Dendritic cell treated with granulocyte-macrophage colony-stimulating factor and Interleukin-4, amounts not matched to agents 40 ng/mL and 50 ng/mL, for 4 days (primary cell): ENCODE measurements at regions of chr1 and their contacts with region 1.

Region 1: DNA sequence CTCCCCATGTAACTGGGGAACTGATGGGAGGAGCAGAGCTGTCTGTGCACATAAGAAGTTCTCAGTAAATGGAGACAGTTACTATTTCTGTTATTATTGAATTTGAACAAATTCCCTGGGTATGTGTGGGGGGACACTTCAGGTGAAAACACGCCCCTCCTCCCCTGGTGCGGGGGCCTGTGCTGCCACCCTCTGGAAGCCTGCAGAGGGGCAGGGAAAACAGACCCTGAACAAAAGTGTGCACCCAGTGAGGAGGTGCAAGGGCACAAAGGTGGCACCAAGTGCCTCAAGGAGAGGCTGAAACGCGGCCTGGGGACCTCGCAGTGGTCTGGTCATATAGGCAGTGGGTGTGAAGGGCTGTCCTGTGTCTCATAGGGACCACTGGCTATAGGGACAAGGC is 18.2 kb upstream of the NADK start:
- H3K4me3 Mint-ChIP-seq: no peak overlapping the region
- H3K27ac Mint-ChIP-seq: peak overlapping the region; percentile 69
- H3K4me1 Mint-ChIP-seq: peaks cover 27% of the 10 kb centered on the region
- H3K27me3 Mint-ChIP-seq: no peaks in the 10 kb centered on the region

Region 2: GRCh38 chr1:1841575-1841995 is 45.1 kb after region 1 on chr1:
- intact Hi-C with region 1: loop called (anchors 10 kb)
- H3K4me3 Mint-ChIP-seq: no peak overlapping the region
- H3K27ac Mint-ChIP-seq: peak overlapping the region; percentile 53
- H3K4me1 Mint-ChIP-seq: peaks cover 56% of the 10 kb centered on the region
- H3K27me3 Mint-ChIP-seq: no peaks in the 10 kb centered on the region

Region 3: DNA sequence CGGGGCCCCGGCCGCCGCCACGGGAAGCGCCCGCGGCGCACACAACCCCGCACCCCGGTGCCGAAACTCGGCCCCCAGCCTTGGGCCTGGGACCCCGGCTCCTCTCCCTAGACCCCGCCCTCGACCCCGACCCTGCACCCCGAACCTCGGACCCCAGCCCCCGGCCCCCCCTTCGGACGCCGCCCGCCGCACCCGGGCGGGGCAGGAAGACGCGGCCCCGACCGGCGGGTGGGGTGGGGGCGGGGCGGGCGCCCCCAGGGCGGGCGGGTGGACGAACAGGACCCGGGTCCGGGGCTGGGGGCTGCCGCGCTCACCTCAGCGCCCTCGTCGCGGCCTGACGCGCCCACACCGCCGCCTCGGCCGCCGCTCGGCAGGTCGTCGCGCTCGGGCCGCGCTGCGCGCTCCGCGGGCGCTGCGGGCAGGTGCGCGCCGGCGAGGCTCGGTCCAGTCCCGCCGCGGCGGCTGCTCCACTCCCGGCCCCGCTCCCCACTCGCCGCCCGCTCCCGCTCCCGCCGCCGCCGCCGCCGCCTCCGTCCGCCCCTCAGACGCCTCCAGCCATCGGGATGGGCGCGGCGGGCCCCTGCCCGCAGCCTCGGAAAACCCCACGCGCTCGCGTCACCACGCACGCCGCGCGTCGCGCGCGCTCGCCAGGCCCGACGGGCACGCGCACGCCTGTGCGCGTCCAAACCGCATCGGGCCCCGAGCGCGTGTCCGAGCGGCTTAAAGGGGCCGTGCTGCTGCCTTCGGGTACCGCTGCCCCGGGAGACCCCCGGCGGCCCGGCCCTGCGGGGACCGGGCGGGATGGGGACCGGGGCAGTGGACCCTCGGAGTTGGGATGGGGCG is 94.3 kb after region 1 on chr1 and contains the start of gene GNB1:
- intact Hi-C with region 1: no loop called
- H3K4me3 Mint-ChIP-seq: peak within 1 kb of the TSS; percentile 83
- H3K27ac Mint-ChIP-seq: peak within 1 kb of the TSS; percentile 83
- H3K4me1 Mint-ChIP-seq: peaks cover 58% of the 10 kb centered on the region
- H3K27me3 Mint-ChIP-seq: peaks cover 24% of the 10 kb centered on the region